ENCODE measurements at regions of chr22 and their contacts with region 1.

Region 1: DNA sequence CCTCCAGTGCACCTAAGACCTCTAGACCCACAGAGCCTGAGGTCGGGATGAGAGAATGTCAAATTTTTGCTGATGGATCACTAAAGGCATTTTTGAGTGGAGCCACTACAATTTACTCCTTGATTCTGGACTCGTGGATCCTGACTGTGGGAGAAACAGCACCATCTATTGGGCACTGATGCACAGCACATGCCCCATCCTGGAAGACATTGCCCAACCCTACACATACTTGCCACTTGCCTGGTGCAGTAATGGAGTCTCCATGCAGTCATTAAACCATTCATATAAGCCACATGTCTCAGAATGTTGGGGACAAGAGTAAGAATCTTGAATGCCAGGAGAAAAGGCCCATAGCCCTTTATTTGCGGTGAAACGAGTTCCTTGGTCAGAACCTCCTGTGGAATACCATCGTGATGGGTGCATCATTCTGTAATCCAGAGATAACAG is 103.9 kb downstream of the GGTLC2 start:
- DNase-seq: no peak
- ATAC-seq: peak; percentile 79
- H3K4me3 ChIP-seq: no peak overlapping the region
- H3K27ac ChIP-seq: no peak overlapping the region
- H3K4me1 ChIP-seq: no peaks in the 10 kb centered on the region; the same call in 1 of the 2 replicates
- H3K27me3 ChIP-seq: no peaks in the 10 kb centered on the region
- CTCF ChIP-seq: peak; percentile 47 to 60 (median 56)
- EP300 ChIP-seq: no peak
- POLR2A ChIP-seq: no peak
- RAD21 ChIP-seq: no peak

Region 2: DNA sequence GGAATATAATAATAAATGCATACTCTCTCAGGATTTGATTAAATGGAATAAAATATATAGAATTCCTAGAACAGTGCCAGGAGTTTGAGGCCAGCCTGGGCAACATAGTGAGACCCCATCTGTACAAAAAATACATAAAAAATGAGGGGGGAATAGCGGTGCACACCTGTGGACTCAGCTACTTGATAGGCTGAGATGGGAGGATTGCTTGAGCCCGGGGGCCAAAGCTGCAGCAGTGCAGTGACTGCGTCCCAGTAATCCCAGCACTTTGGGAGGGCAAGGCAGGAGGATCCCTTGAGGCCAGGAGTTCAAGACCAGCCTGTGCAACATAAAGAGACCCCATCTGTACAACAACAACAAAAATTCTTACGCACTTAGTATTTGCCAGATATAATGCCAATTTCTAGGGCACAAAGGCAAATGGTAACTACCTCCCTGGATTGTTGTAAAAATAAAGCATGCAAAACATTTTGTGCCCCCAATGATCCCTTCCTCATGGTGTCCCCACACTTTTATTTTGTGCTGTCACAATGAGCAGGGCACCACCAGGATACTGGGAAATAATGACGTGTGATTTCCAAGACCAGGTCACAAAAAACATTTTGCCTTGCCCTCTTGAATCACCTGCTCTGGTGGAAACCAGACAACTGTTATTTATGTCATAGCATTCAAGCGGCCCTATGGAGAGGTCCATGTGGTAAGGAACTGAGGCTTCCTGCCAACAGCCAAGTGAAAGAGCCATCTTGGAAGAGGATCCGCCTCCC is 209.9 kb before region 1 on chr22:
- CTCF ChIA-PET with region 1: no interaction called
- POLR2A ChIA-PET with region 1: no interaction called
- RAD21 ChIA-PET with region 1: no interaction called
- SMC1A ChIA-PET with region 1: no interaction called
- in situ Hi-C with region 1: no loop called
- intact Hi-C with region 1: no loop called
- DNase-seq: no peak
- ATAC-seq: no peak
- H3K4me3 ChIP-seq: no peak overlapping the region
- H3K27ac ChIP-seq: no peak overlapping the region
- H3K4me1 ChIP-seq: no peaks in the 10 kb centered on the region
- H3K27me3 ChIP-seq: no peaks in the 10 kb centered on the region
- CTCF ChIP-seq: no peak
- EP300 ChIP-seq: no peak
- POLR2A ChIP-seq: no peak
- RAD21 ChIP-seq: no peak

Region 3: DNA sequence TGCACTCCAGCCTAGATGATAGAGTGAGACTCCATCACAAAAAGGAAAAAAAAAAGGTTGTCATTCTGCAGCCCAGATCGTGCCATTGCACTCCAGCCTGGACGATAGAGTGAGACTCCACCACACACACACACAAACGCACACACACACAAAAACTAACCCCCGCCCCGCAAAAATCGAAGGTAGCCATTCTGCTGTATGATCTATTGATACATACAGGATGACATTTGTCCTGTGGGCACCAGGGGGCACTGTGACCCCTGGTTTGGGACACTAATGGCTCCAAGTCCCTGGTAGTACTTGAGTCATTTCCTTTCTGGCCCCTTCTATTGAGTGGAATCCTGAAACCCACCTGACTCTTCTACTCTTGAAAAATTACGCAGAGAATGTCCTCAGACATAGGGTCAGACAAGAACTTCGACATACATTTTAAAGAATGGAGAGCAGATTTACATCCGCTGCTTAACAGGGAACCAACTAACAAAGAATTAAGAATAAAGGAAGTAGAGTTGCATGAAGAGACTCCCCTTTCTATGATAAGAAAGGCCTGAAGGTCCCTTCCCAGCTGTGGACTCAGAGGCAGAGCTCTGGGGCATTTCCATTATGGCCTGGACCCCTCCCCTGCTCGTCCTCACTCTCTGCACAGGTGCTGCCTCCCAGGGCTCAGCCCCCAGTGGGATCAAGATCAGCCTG is 154.2 kb before region 1 on chr22:
- CTCF ChIA-PET with region 1: interaction called, 8 read pairs
- POLR2A ChIA-PET with region 1: no interaction called
- RAD21 ChIA-PET with region 1: no interaction called
- SMC1A ChIA-PET with region 1: interaction called, 3 read pairs
- in situ Hi-C with region 1: no loop called
- intact Hi-C with region 1: loop called (anchors 5 kb)
- DNase-seq: no peak
- ATAC-seq: peak; percentile 91
- H3K4me3 ChIP-seq: no peak overlapping the region
- H3K27ac ChIP-seq: no peak overlapping the region
- H3K4me1 ChIP-seq: no peaks in the 10 kb centered on the region
- H3K27me3 ChIP-seq: no peaks in the 10 kb centered on the region
- CTCF ChIP-seq: peak; percentile 59 to 75 (median 65)
- EP300 ChIP-seq: no peak
- POLR2A ChIP-seq: no peak
- RAD21 ChIP-seq: peak; percentile 76

Region 4: GRCh38 chr22:22687638-22688500 is 60.5 kb before region 1 on chr22:
- CTCF ChIA-PET with region 1: interaction called, 28 read pairs
- POLR2A ChIA-PET with region 1: no interaction called
- RAD21 ChIA-PET with region 1: interaction called, 4 read pairs
- SMC1A ChIA-PET with region 1: interaction called, 4 read pairs
- in situ Hi-C with region 1: no loop called
- intact Hi-C with region 1: no loop called
- DNase-seq: no peak
- ATAC-seq: peak; percentile 82
- H3K4me3 ChIP-seq: no peak overlapping the region
- H3K27ac ChIP-seq: no peak overlapping the region
- H3K4me1 ChIP-seq: peaks cover 32% of the 10 kb centered on the region
- H3K27me3 ChIP-seq: no peaks in the 10 kb centered on the region
- CTCF ChIP-seq: peak; percentile 64 to 69 (median 65); a peak in 5 of 6 replicates
- EP300 ChIP-seq: no peak
- POLR2A ChIP-seq: no peak
- RAD21 ChIP-seq: peak; percentile 38

Region 5: DNA sequence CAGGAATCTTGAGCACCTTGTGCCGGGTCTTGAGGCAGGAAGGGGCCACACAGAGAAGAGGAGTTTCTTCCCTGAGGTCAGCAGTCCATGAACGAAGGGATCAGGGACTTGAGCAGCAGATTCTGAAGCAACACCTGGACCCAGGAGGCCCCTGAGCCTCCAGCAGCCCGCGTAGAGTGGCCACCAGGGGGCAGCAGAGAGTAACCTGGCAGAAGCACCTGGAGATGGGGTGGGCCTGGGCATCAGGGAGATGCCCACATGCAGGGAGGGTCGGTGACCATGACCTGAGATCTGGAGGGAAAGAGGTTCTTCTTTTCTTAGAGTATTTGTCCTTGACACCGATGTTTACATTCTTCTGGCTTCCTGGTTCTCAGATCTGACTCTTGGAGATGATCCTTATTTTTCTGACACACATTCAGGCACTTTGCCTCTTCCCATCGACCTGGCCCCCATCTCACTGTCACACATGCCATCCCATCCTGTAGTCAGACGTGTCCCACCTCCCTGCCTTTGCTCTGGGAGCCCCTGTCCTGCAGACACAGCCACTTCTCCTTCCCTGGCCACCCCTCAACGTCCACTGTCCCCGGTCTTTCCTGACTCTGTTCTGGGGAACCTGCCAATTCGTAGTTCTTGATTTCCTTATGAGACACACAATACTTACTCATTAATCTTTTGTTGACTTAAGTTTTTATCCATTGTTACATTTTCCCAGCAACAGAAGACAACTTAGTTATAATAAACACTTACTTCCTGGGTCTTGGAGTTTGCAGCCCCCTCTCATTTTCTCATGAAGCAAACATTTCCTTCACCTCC is 37.4 kb before region 1 on chr22:
- CTCF ChIA-PET with region 1: interaction called, 65 read pairs
- POLR2A ChIA-PET with region 1: no interaction called
- RAD21 ChIA-PET with region 1: interaction called, 12 read pairs
- SMC1A ChIA-PET with region 1: interaction called, 11 read pairs
- in situ Hi-C with region 1: loop called (anchors 5 kb)
- intact Hi-C with region 1: loop called (anchors 5 kb)
- DNase-seq: no peak
- ATAC-seq: peak; percentile 70
- H3K4me3 ChIP-seq: no peak overlapping the region
- H3K27ac ChIP-seq: no peak overlapping the region
- H3K4me1 ChIP-seq: peaks cover 12% of the 10 kb centered on the region; the same call in 1 of the 2 replicates
- H3K27me3 ChIP-seq: no peaks in the 10 kb centered on the region
- CTCF ChIP-seq: peak; percentile 56 to 87 (median 64)
- EP300 ChIP-seq: no peak
- POLR2A ChIP-seq: no peak
- RAD21 ChIP-seq: no peak

Region 6: DNA sequence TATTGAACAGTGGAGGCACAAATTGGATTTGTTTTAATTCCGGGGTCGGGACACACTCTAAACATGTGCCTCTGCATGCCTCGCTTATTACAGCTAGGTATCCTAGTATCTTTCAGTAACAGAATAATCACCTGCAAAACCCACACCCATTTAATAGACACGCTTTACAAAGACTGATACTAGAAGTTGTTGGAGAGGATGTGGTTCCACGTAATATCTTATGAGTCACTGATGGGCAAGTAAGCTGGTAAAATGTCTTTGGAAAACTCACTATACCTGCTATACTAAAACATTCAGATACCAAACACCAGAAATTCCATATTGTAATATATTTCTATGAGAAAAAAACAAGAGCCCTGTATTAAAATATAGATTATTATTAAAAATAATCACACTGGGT is 19.9 kb before region 1 on chr22:
- CTCF ChIA-PET with region 1: interaction called, 115 read pairs
- POLR2A ChIA-PET with region 1: no interaction called
- RAD21 ChIA-PET with region 1: interaction called, 3 read pairs
- SMC1A ChIA-PET with region 1: interaction called, 4 read pairs
- in situ Hi-C with region 1: no loop called
- intact Hi-C with region 1: no loop called
- DNase-seq: no peak
- ATAC-seq: no peak
- H3K4me3 ChIP-seq: no peak overlapping the region
- H3K27ac ChIP-seq: no peak overlapping the region
- H3K4me1 ChIP-seq: no peaks in the 10 kb centered on the region
- H3K27me3 ChIP-seq: no peaks in the 10 kb centered on the region
- CTCF ChIP-seq: no peak
- EP300 ChIP-seq: no peak
- POLR2A ChIP-seq: no peak
- RAD21 ChIP-seq: no peak

Region 7: DNA sequence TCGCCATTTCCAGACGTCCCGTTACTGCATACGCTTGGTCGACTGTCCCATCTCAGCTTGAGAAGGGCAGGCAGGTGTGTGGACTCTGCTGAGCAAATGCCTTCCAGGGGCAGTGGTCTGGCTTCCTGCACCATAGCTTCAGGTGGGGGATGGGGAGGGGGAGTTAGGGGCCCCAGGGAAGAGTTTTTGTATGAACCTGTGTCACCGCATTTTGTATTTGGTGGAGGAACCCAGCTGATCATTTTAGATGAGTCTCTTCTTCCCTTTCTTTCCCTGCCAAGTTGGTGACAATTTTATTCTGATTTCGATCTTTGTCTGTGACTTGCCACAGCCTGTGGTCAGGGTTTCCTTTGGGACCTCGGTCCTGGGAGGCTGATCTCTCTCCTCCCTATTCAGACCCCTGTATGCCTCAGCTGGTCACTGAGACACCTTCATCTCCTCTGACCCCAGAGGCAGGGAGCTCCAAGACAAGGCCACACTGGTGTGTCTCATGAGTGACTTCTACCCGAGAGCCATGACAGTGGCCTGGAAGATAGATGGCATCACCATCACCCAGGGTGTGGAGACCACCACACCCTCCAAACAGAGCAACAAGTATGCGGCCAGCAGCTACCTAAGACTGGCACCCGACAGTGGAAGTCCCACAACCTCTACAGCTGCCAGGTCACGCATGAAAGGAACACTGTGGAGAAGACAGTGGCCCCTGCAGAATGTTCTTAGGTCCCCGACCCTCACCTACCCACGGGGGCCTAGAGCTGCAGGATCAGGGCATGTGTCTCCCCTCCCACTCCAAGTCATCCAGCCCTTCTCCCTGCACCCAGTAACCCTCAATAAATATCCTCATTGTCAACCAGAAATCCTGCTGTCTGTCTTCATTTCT is 162.3 kb after region 1 on chr22:
- CTCF ChIA-PET with region 1: no interaction called
- POLR2A ChIA-PET with region 1: no interaction called
- RAD21 ChIA-PET with region 1: no interaction called
- SMC1A ChIA-PET with region 1: no interaction called
- in situ Hi-C with region 1: no loop called
- intact Hi-C with region 1: no loop called
- DNase-seq: no peak
- ATAC-seq: no peak
- H3K4me3 ChIP-seq: no peak overlapping the region
- H3K27ac ChIP-seq: no peak overlapping the region; the same call in 1 of the 2 replicates
- H3K4me1 ChIP-seq: peaks cover 36% of the 10 kb centered on the region
- H3K27me3 ChIP-seq: no peaks in the 10 kb centered on the region
- CTCF ChIP-seq: no peak
- EP300 ChIP-seq: no peak
- POLR2A ChIP-seq: no peak
- RAD21 ChIP-seq: no peak